PC-9 (cell line): ENCODE measurements at regions of chr11 and their contacts with region 1.

Region 1: DNA sequence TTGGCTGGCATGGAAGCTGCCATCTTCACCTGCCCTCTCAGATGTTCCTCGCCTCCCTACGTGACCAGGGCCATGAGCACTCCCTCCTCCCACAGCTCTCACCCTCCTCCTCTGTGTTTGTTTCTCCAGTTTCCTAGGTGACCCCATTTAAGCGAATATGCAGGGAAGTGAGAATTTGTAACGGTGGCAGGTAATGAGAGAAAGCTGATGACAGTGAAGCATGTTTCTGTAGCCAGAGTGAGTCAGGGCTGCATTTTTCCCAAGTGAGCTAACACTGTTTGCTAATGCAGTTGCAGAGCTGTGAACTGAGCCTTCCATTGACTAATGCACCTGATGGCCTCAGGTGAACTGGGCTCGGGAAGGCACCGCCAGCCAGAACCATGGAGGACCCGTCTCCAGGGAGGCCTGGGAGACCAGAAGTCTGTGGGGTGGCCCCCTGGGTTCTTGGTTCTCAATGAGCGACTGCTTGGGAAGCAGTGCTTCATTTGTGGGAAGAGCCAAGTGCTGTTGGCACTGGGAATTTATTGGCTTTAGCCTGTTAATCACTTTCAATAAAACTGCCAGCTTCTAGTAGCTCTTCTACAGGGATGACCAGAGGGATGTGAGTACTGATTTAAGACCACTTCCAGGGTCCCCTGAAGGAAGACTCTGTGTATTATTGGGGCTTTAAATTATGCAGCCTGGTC is 64.5 kb downstream of the BARX2 start:
- DNase-seq: peak; percentile 75 to 99
- H3K4me3 ChIP-seq: no peak overlapping the region
- H3K27ac ChIP-seq: peak overlapping the region; percentile 71
- H3K4me1 ChIP-seq: peaks cover 32% of the 10 kb centered on the region
- H3K27me3 ChIP-seq: no peaks in the 10 kb centered on the region
- CTCF ChIP-seq: no peak

Region 2: DNA sequence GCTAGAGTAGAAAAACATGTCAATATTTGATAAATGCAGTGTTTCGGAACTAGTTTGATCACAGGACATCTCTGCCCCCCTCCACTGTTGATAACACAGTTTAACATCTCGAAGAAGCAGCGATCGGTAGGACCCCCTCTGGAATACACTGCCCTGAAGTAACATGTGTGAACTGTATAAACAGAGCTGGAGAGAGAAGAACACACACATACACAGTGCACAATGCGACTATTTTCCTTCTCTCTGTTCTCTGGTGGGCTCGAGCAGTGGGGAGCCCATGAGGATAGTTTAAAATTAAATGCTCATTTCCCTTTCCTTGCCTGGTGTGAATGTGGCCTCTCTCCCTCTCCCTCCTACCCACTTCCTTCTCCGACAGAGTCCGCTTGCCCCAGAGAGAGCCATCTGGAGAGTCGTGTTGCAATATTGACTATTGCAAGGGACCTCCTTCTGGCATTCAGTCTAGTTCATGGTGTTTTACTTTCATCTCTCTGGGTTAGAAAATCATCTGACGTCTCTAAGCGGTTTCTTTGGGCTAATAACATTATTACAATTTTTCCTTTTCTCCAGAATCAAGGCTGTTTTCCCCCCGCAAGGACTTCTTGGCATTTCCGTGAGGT is 116.2 kb before region 1 on chr11:
- CTCF ChIA-PET with region 1: no interaction called
- POLR2A ChIA-PET with region 1: no interaction called
- intact Hi-C with region 1: no loop called
- DNase-seq: peak in 1 of 2 experiments; percentile 39
- H3K4me3 ChIP-seq: no peak overlapping the region
- H3K27ac ChIP-seq: 0 out of 2 replicates have a peak overlapping the region, but pooled peaks have one; percentile 34
- H3K4me1 ChIP-seq: peaks cover 31% of the 10 kb centered on the region
- H3K27me3 ChIP-seq: no peaks in the 10 kb centered on the region
- CTCF ChIP-seq: no peak

Region 3: GRCh38 chr11:129731341-129731740 is 291.2 kb after region 1 on chr11:
- CTCF ChIA-PET with region 1: no interaction called
- POLR2A ChIA-PET with region 1: no interaction called
- intact Hi-C with region 1: loop called (anchors 1 kb)
- DNase-seq: peak; percentile 70 to 98
- H3K4me3 ChIP-seq: no peak overlapping the region
- H3K27ac ChIP-seq: peak overlapping the region; percentile 89
- H3K4me1 ChIP-seq: peaks cover 71% of the 10 kb centered on the region
- H3K27me3 ChIP-seq: no peaks in the 10 kb centered on the region
- CTCF ChIP-seq: no peak